ENCODE measurements at regions of chr10 and their contacts with region 1.

Region 1: GRCh38 chr10:99560277-99561126 is 27.8 kb downstream of the NKX2-3 start:
- DNase-seq: peak in 9 of 14 experiments; percentile 7 to 67 (median 26)
- ATAC-seq: no peak
- H3K4me3 ChIP-seq: no peak overlapping the region
- H3K4me3 Mint-ChIP-seq: no peak overlapping the region
- H3K27ac ChIP-seq: no peak overlapping the region
- H3K27ac Mint-ChIP-seq: no peak overlapping the region
- H3K4me1 ChIP-seq: peaks cover 2% of the 10 kb centered on the region
- H3K4me1 Mint-ChIP-seq: peaks cover 4% of the 10 kb centered on the region
- H3K27me3 ChIP-seq: peaks cover 9 to 13% of the 10 kb centered on the region in 2 experiments
- H3K27me3 Mint-ChIP-seq: peaks cover 40% of the 10 kb centered on the region
- CTCF ChIP-seq: peak; percentile 79

Region 2: DNA sequence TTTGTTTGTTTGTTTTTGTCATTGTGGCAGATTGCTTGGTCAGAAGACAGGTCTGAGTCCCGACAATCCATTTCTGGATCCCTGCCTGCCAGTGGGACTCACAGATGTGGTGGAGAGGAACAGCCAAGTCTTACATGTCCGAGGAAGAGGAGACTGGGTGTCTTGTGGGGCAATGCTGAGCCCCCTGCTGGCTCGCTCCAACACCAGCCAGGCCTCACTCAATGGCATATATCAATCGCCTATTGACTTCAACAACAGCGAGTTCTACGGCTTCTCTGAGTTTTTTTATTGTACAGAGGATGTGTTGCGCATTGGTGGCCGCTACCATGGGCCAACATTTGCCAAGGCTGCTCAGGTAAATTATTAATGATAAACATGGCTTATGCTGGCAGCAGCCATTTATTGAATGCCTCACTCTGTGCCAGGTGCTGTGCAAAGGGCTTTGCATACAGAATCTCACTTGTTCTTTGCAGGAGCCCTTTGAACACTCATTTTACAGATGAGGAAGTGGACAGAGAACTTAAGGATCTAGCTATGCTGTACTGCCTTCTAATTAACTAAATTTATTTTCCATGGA is 138.1 kb after region 1 on chr10:
- CTCF ChIA-PET with region 1: no interaction called
- POLR2A ChIA-PET with region 1: no interaction called
- intact Hi-C with region 1: loop called in 1 of 2 experiments (anchors 5 kb)
- DNase-seq: peak in 2 of 14 experiments; percentile 3 to 8
- ATAC-seq: no peak
- H3K4me3 ChIP-seq: no peak overlapping the region
- H3K4me3 Mint-ChIP-seq: no peak overlapping the region
- H3K27ac ChIP-seq: no peak overlapping the region
- H3K27ac Mint-ChIP-seq: no peak overlapping the region
- H3K4me1 ChIP-seq: no peaks in the 10 kb centered on the region
- H3K4me1 Mint-ChIP-seq: no peaks in the 10 kb centered on the region
- H3K27me3 ChIP-seq: no peaks in the 10 kb centered on the region
- H3K27me3 Mint-ChIP-seq: no peaks in the 10 kb centered on the region
- CTCF ChIP-seq: peak; percentile 15

Region 3: DNA sequence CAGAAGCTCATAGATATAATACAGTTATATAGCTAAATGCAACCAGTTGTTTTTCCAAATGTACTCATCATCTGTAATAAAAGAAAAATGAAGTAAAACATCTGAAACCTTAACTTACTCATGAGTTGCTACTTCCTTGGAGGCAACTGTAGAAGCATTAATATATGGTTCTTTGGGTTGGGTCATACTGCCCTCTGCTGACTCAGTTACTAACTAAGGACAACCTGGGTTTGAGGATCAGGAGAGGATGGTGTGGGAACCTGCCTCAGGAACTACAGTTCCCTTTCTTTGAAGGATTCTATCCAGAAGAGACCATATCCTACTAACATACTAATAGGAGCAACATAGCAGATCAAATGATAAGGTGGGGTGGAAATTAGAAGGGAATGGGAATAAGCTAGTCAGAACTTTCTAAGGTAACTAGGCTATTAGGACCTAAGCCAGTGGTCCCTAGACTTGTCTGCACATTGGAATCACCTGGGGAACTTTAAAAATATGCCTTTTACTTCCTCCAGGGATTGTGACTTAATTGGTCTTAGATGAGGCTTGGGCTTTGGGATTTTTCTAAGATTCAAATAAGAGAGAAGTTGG is 150.7 kb after region 1 on chr10:
- CTCF ChIA-PET with region 1: no interaction called
- POLR2A ChIA-PET with region 1: no interaction called
- intact Hi-C with region 1: loop called (anchors 1 to 2 kb)
- DNase-seq: peak in 4 of 14 experiments; percentile 40 to 67 (median 55)
- ATAC-seq: peak; percentile 69
- H3K4me3 ChIP-seq: no peak overlapping the region
- H3K4me3 Mint-ChIP-seq: no peak overlapping the region
- H3K27ac ChIP-seq: no peak overlapping the region
- H3K27ac Mint-ChIP-seq: no peak overlapping the region
- H3K4me1 ChIP-seq: no peaks in the 10 kb centered on the region
- H3K4me1 Mint-ChIP-seq: no peaks in the 10 kb centered on the region
- H3K27me3 ChIP-seq: no peaks in the 10 kb centered on the region
- H3K27me3 Mint-ChIP-seq: no peaks in the 10 kb centered on the region
- CTCF ChIP-seq: peak; percentile 59